Naive thymus-derived CD4-positive, alpha-beta T cell (primary cell): ENCODE measurements at regions of chr20 and their contacts with region 1.

Region 1: GRCh38 chr20:35699127-35699975 is at the starts of genes NFS1 and ROMO1:
- DNase-seq: peak; percentile 71 to 87 (median 82)
- ATAC-seq: peak; percentile 92
- H3K4me3 ChIP-seq: peak within 1 kb of the TSS; percentile 89
- H3K4me3 Mint-ChIP-seq: peak within 1 kb of the TSS; percentile 90 to 99 (median 98)
- H3K27ac ChIP-seq: peak within 1 kb of the TSS; percentile 87
- H3K27ac Mint-ChIP-seq: peak within 1 kb of the TSS; percentile 95 to 99 (median 97)
- H3K4me1 ChIP-seq: peaks cover 13 to 16% of the 10 kb centered on the region in 2 donors
- H3K4me1 Mint-ChIP-seq: peaks cover 15 to 66% (median 52%) of the 10 kb centered on the region in 7 donors
- H3K27me3 ChIP-seq: no peaks in the 10 kb centered on the region
- H3K27me3 Mint-ChIP-seq: no peaks in the 10 kb centered on the region
- total RNA-seq, gene NFS1: 18.2 to 41.1 (median 35.0) TPM
- total RNA-seq, gene ROMO1: 33.2 to 85.5 (median 38.5) TPM

Region 2: DNA sequence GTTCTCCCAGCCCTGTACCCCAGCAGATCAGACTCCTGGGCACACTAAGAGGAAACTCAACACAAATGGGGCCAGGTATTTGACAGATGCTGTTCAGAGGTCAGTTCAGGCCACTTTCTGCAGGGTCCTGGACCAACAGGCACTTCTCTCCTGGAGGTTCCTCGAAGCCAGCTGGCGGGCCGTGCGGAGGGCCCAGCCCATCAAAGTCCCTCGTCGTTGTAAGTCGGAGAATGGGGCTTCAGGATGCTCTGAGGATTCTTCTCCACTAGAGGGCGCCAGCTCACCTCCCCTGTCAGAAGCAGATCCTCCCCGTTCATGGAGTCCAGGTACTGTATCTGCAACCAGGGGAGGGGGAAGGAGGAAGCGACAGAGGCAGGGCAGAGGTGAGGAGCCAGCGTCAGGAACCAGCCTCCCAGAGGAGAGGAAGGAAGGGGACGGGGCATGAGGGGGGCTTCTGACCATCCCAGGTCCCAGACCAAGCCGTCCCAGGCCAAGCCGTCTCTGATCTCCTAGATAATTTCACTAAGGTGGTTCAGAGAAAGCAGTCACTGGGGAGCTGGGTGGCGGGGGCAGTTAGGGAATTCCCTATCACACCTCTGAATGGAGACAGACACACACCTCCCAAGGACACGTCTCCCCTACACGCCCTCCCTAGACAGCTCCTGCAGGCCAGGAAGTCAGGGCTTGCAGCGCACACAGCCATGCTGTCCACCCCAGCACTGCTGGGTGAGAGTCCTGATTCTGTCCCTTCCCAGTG is 395.4 kb before region 1 on chr20:
- CTCF ChIA-PET with region 1: no interaction called
- POLR2A ChIA-PET with region 1: no interaction called
- intact Hi-C with region 1: no loop called
- DNase-seq: peak; percentile 57 to 87 (median 81)
- ATAC-seq: peak; percentile 96
- H3K4me3 ChIP-seq: no peak overlapping the region
- H3K4me3 Mint-ChIP-seq: no peak overlapping the region
- H3K27ac ChIP-seq: no peak overlapping the region
- H3K27ac Mint-ChIP-seq: peak overlapping the region in 6 of 9 donors; percentile 8 to 78 (median 60)
- H3K4me1 ChIP-seq: no peaks in the 10 kb centered on the region
- H3K4me1 Mint-ChIP-seq: peaks cover 0 to 40% (median 9%) of the 10 kb centered on the region in 7 donors
- H3K27me3 ChIP-seq: no peaks in the 10 kb centered on the region
- H3K27me3 Mint-ChIP-seq: no peaks in the 10 kb centered on the region

Region 3: GRCh38 chr20:35601008-35601973 is 98.1 kb before region 1 on chr20:
- CTCF ChIA-PET with region 1: interaction called, 3 read pairs
- POLR2A ChIA-PET with region 1: interaction called, 3 read pairs
- intact Hi-C with region 1: loop called (anchors 1 kb)
- DNase-seq: peak; percentile 66 to 82 (median 77)
- ATAC-seq: peak; percentile 95
- H3K4me3 ChIP-seq: peak overlapping the region; percentile 72
- H3K4me3 Mint-ChIP-seq: peak overlapping the region; percentile 72 to 84 (median 80)
- H3K27ac ChIP-seq: peak overlapping the region; percentile 36
- H3K27ac Mint-ChIP-seq: peak overlapping the region in 1 of 9 donors; percentile 10
- H3K4me1 ChIP-seq: peaks cover 5 to 6% of the 10 kb centered on the region in 2 donors
- H3K4me1 Mint-ChIP-seq: peaks cover 0 to 11% (median 6%) of the 10 kb centered on the region in 7 donors
- H3K27me3 ChIP-seq: peaks cover 0 to 5% of the 10 kb centered on the region in 2 donors
- H3K27me3 Mint-ChIP-seq: peaks cover 0 to 65% (median 5%) of the 10 kb centered on the region in 5 donors

Region 4: GRCh38 chr20:35636095-35636494 is 63.3 kb before region 1 on chr20:
- CTCF ChIA-PET with region 1: no interaction called
- POLR2A ChIA-PET with region 1: no interaction called
- intact Hi-C with region 1: no loop called
- DNase-seq: no peak
- ATAC-seq: no peak
- H3K4me3 ChIP-seq: no peak overlapping the region
- H3K4me3 Mint-ChIP-seq: no peak overlapping the region
- H3K27ac ChIP-seq: no peak overlapping the region
- H3K27ac Mint-ChIP-seq: peak overlapping the region in 7 of 9 donors; percentile 22 to 80 (median 70)
- H3K4me1 ChIP-seq: peaks cover 0 to 12% of the 10 kb centered on the region in 2 donors
- H3K4me1 Mint-ChIP-seq: peaks cover 28 to 69% (median 59%) of the 10 kb centered on the region in 7 donors
- H3K27me3 ChIP-seq: no peaks in the 10 kb centered on the region
- H3K27me3 Mint-ChIP-seq: no peaks in the 10 kb centered on the region

Region 5: DNA sequence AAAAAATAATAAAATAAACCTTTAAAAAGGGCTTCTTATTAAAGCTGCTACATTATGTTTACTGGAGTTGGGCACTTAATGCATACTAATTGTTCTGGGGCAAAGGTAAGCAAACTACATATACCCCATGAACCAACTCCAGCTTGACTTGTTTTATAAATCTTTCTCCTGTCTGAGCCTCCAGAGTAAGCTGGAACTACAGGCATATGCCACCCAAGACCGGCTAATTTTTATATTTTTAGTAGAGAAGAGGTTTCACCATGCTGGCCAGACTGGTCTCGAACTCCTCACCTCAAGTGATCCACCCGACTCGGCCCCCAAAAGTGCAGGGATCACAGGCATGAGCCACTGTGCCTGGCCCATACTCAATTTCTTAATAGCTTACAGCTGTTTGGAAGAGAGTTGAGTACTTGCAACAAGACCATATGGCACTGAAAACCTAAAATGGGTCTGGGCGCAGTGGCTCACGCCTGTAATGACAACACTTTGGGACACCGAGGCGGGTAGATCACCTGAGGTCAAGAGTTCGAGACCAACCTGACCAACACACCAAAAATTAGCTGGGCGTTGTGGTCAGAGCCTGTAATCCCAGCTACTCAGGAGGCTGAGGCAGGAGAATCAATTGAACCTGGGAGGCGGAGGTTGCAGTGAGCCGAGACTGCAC is 19.8 kb after region 1 on chr20:
- CTCF ChIA-PET with region 1: no interaction called
- POLR2A ChIA-PET with region 1: interaction called, 8 read pairs
- intact Hi-C with region 1: loop called in 1 of 2 experiments (anchors 2 kb)
- DNase-seq: no peak
- ATAC-seq: no peak
- H3K4me3 ChIP-seq: no peak overlapping the region
- H3K4me3 Mint-ChIP-seq: no peak overlapping the region
- H3K27ac ChIP-seq: no peak overlapping the region
- H3K27ac Mint-ChIP-seq: peak overlapping the region in 1 of 9 donors; percentile 59
- H3K4me1 ChIP-seq: peaks cover 8 to 14% of the 10 kb centered on the region in 2 donors
- H3K4me1 Mint-ChIP-seq: peaks cover 23 to 69% (median 45%) of the 10 kb centered on the region in 7 donors
- H3K27me3 ChIP-seq: no peaks in the 10 kb centered on the region
- H3K27me3 Mint-ChIP-seq: no peaks in the 10 kb centered on the region

Region 6: DNA sequence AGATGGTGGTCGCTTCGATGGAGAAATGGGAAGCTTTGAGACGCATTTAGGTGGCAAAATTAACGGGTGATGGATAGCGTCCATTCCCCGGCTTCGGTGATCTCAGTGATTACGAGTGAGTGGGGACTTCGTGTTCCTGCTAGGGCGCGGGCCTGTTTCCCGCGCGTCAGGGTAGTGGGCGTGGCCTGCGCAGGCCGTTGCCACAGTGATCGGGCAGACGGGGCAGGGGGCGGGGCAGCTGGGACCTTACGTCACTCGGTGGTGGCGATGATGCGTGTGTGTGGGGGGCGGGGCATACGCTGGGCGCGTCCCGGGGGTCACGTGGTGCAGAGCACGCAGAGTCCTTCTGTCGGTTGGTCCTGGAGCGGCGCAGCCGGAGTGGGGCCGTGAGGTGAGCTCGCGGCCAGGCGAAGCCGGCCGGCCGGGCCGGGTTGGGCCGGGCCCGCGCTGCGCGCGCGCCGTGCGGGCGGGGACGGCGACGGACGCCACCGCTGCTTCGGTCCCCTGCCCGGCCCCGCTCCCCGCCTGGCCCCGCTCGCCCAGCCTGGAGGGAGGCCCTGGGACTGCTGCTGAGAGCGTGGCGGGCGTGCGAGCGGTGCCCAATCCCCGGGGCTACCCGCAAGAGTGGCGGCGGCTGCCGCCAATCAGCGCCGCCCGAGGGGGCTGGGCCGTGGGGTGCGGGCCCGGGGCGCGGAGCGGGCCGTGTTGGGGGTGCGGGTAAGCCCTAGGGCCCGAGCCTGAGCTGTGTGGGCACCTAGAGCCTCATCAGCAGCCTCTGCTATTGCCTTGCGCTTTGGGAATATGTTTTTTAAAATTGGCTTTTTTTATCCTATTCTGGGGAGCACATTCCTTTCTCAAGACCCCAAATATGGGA is 72.6 kb after region 1 on chr20 and contains the start of gene PHF20:
- CTCF ChIA-PET with region 1: no interaction called
- POLR2A ChIA-PET with region 1: interaction called, 9 read pairs
- intact Hi-C with region 1: loop called (anchors 2 kb)
- DNase-seq: peak; percentile 98 to 100 (median 99)
- ATAC-seq: peak; percentile 90
- H3K4me3 ChIP-seq: peak within 1 kb of the TSS; percentile 59
- H3K4me3 Mint-ChIP-seq: peak within 1 kb of the TSS; percentile 84 to 97 (median 94)
- H3K27ac ChIP-seq: peak within 1 kb of the TSS; percentile 98
- H3K27ac Mint-ChIP-seq: peak within 1 kb of the TSS; percentile 96 to 100 (median 100)
- H3K4me1 ChIP-seq: peaks cover 76 to 78% of the 10 kb centered on the region in 2 donors
- H3K4me1 Mint-ChIP-seq: peaks cover 52 to 88% (median 74%) of the 10 kb centered on the region in 7 donors
- H3K27me3 ChIP-seq: no peaks in the 10 kb centered on the region
- H3K27me3 Mint-ChIP-seq: no peaks in the 10 kb centered on the region
- total RNA-seq, gene PHF20: 57.5 to 157 (median 78.0) TPM

Region 7: DNA sequence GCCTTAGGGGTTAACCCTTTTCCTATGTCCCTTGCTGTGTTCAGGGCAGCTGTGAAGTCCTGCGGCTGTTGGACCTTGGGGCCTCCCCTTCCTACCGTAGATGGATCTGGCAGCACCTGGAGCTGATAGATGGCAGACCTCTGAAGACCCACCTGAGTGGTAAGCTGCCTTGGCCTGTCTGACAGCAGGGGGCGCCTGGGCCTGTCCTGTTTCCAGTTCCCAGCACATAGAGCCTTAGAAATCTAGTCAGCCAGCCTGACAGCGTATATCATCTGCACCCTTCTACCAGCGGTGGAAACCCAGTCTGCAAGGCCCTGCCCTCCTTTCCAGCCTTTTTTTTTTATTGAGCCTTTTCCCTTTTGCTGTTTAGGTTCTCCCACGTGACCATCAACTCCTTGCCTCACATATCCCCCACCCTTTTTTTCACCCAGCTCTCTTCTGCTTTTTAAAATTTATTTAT is 295.7 kb after region 1 on chr20:
- CTCF ChIA-PET with region 1: no interaction called
- POLR2A ChIA-PET with region 1: no interaction called
- intact Hi-C with region 1: no loop called
- DNase-seq: peak; percentile 59 to 82 (median 76)
- ATAC-seq: peak; percentile 91
- H3K4me3 ChIP-seq: no peak overlapping the region
- H3K4me3 Mint-ChIP-seq: no peak overlapping the region
- H3K27ac ChIP-seq: no peak overlapping the region
- H3K27ac Mint-ChIP-seq: peak overlapping the region in 2 of 9 donors; percentile 36 to 52
- H3K4me1 ChIP-seq: no peaks in the 10 kb centered on the region
- H3K4me1 Mint-ChIP-seq: peaks cover 4 to 13% (median 5%) of the 10 kb centered on the region in 7 donors
- H3K27me3 ChIP-seq: no peaks in the 10 kb centered on the region
- H3K27me3 Mint-ChIP-seq: peaks cover 0 to 9% (median 4%) of the 10 kb centered on the region in 5 donors

Region 8: GRCh38 chr20:37123441-37123840 is 1424.1 kb after region 1 on chr20:
- CTCF ChIA-PET with region 1: no interaction called
- POLR2A ChIA-PET with region 1: no interaction called
- intact Hi-C with region 1: no loop called
- DNase-seq: no peak
- ATAC-seq: peak; percentile 88
- H3K4me3 ChIP-seq: no peak overlapping the region
- H3K4me3 Mint-ChIP-seq: no peak overlapping the region
- H3K27ac ChIP-seq: no peak overlapping the region
- H3K27ac Mint-ChIP-seq: no peak overlapping the region
- H3K4me1 ChIP-seq: no peaks in the 10 kb centered on the region
- H3K4me1 Mint-ChIP-seq: no peaks in the 10 kb centered on the region
- H3K27me3 ChIP-seq: no peaks in the 10 kb centered on the region
- H3K27me3 Mint-ChIP-seq: peaks cover 0 to 8% (median 0%) of the 10 kb centered on the region in 5 donors